ENCODE measurements at regions of chr2 and their contacts with region 1.

Region 1: DNA sequence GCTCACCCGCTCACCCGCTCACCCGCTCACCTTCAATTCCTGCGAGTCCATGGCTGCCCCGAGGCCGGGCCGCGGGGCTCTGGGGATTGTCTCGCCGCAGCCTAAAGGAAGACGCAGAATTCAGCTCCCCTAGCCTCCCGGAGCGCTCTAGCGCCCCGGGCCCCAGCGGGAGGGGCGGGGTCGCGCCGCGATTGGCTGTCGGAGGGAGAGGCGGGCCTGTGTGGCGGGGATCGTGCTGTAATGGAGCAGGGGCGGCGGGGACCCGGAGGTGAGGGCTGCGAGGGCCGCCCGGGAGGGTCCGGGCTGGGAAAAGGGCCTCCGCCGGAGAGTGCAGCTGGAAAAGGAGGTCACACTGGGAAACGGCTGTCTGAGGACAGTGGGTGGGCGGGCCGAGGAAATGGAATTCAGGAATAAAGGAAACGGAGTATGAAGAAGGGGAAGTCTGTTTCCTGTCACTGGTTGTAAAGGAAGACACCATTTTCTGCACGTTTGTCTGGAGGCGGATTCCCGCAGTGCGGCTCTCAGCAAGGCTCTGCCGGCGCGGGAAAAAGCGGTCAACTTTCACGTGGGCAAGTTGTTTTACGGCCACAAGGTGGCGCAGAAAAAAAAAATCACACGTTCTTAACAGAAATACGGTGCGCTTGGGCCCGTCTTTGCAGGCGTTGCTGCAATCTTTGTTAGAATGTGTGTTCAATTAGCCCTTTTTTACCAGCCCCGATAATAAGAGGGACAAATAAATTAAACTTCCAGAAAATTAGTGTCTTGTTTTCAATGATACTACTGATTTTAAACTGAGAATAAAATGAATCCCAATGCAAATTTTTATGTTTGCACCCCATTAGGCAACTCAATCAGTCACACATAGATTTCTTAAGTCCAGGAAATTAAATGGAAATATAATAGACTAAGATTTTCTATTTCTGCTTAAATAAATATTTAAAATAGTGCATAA is at the start of gene TTC21B:
- DNase-seq: peak; percentile 89 to 98
- H3K4me3 ChIP-seq: peak within 1 kb of the TSS; percentile 82
- H3K4me1 ChIP-seq: peaks cover 21% of the 10 kb centered on the region
- H3K27me3 ChIP-seq: no peaks in the 10 kb centered on the region

Region 2: GRCh38 chr2:166127217-166128155 is 173.6 kb after region 1 on chr2 and contains the start of gene SCN1A:
- in situ Hi-C with region 1: loop called (anchors 10 kb)
- DNase-seq: peak in 1 of 2 experiments; percentile 55
- H3K4me3 ChIP-seq: no peak within 1 kb of the TSS
- H3K4me1 ChIP-seq: peaks cover 17% of the 10 kb centered on the region
- H3K27me3 ChIP-seq: peaks cover 6% of the 10 kb centered on the region

Region 3: GRCh38 chr2:166449439-166449838 is 495.5 kb after region 1 on chr2:
- in situ Hi-C with region 1: no loop called
- DNase-seq: no peak
- H3K4me3 ChIP-seq: no peak overlapping the region
- H3K4me1 ChIP-seq: no peaks in the 10 kb centered on the region
- H3K27me3 ChIP-seq: no peaks in the 10 kb centered on the region